Activated B cell treated with CpG ODN at 0.5 μM for 24 hours (primary cell): ENCODE measurements at regions of chr13 and their contacts with region 1.

Region 1: GRCh38 chr13:44435142-44435982 is 61.7 kb downstream of the SERP2 start:
- DNase-seq: peak; percentile 78
- ATAC-seq: peak; percentile 90
- H3K4me3 Mint-ChIP-seq: peak overlapping the region; percentile 85
- H3K27ac Mint-ChIP-seq: peak overlapping the region; percentile 69
- H3K4me1 Mint-ChIP-seq: peaks cover 28% of the 10 kb centered on the region
- H3K27me3 Mint-ChIP-seq: peaks cover 8% of the 10 kb centered on the region
- CTCF ChIP-seq: no peak

Region 2: DNA sequence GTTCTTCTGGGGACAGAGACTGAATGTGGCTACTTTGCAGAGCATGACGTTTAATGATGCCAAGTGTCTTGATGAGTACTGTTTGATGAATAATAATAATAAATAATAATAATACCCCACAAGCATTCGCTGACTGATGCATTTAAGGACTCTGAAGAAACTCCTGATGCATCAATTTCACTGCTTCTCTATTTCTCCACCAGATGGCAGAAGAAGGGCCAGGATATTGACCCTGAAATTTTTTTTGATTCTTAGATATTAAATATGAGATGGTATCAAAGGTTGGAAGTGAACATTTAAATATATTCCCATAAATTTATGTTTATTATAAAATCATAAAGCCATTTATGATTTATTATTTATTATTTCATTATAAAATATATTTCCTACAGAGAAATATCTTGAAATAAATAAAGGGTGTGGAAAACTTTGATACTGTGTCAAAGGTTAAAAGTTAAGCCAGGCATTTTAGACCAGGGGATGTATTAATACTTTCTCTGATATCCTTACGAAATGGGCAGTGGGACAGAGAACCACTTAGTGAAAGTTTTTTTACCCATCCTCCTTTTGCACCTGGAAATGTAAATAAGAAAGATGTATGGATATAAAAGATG is 384.8 kb before region 1 on chr13:
- CTCF ChIA-PET with region 1: interaction called, 36 read pairs
- POLR2A ChIA-PET with region 1: no interaction called
- intact Hi-C with region 1: loop called (anchors 1 kb)
- DNase-seq: no peak
- ATAC-seq: no peak
- H3K4me3 Mint-ChIP-seq: no peak overlapping the region
- H3K27ac Mint-ChIP-seq: no peak overlapping the region
- H3K4me1 Mint-ChIP-seq: no peaks in the 10 kb centered on the region
- H3K27me3 Mint-ChIP-seq: peaks cover 33% of the 10 kb centered on the region
- CTCF ChIP-seq: no peak

Region 3: GRCh38 chr13:44141725-44142539 is 293.4 kb before region 1 on chr13:
- CTCF ChIA-PET with region 1: interaction called, 3 read pairs
- POLR2A ChIA-PET with region 1: interaction called, 7 read pairs
- intact Hi-C with region 1: loop called (anchors 1 kb)
- DNase-seq: peak; percentile 100
- ATAC-seq: peak; percentile 99
- H3K4me3 Mint-ChIP-seq: peak overlapping the region; percentile 93
- H3K27ac Mint-ChIP-seq: peak overlapping the region; percentile 86
- H3K4me1 Mint-ChIP-seq: peaks cover 29% of the 10 kb centered on the region
- H3K27me3 Mint-ChIP-seq: peaks cover 8% of the 10 kb centered on the region
- CTCF ChIP-seq: no peak

Region 4: DNA sequence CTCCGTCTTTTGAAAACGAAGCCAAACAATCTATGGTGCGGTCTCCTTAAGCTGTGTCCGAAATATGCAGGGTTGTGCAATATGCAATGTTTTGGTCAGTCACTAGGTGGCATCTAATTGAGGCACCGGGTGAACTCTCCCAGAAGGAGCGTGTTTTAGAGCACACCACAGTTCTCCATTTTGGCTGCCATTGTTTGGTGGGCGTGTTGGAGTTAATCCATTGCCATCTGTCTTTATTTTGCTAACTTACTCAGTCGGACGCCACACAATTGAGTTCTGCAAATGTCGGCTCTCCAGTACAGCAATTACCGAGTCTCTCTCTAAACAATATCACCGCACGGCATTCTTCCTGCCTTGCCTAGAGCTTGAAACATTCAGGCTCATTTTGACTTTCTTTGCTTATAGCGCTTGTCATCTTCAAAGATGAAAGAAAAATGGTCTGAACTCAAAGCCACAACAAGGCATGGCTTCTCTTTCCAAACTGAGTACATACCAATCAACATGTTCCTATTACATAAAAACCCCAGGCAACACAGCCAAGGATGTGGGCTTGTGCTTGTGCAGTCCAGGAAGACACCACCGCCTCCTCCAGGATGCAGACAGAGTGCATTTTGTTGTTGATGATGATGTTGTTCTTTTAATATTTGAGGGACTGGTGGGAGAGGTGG is 243.7 kb before region 1 on chr13:
- CTCF ChIA-PET with region 1: interaction called, 10 read pairs
- POLR2A ChIA-PET with region 1: no interaction called
- intact Hi-C with region 1: loop called (anchors 1 kb)
- DNase-seq: no peak
- ATAC-seq: no peak
- H3K4me3 Mint-ChIP-seq: no peak overlapping the region
- H3K27ac Mint-ChIP-seq: no peak overlapping the region
- H3K4me1 Mint-ChIP-seq: no peaks in the 10 kb centered on the region
- H3K27me3 Mint-ChIP-seq: peaks cover 9% of the 10 kb centered on the region
- CTCF ChIP-seq: no peak

Region 5: DNA sequence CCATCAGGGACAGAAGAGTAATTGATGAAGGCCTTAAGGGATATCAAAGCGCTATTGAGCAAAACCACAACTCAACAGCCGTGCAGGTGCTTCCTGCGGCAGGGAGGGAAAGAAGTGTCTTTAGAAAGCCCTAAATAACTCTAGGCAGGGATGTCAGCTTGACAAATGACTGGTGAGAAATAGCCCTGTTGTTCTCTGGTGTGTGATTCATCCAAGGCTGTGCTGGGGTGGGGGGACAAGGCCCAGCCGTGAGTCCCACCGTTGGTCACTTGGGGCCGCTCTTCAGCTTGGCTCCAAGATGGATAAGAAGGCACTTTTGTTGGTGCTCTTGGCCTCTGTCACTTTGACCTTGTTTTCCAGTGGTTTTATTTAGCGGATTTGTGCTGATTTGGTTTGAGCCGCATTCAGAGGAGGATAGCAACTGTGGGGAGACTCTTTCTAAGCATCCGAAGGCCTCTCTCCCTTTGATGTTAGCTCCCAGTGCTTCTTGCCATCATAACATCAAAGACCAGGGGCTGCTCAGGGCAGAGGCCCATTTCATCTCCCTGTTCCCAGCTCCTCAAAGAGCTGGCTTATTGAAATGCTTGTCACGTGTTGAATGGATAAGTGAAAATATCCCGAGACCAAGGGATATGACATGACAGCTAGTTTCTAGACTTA is 192.0 kb before region 1 on chr13:
- CTCF ChIA-PET with region 1: interaction called, 17 read pairs
- POLR2A ChIA-PET with region 1: interaction called, 5 read pairs
- intact Hi-C with region 1: loop called (anchors 1 kb)
- DNase-seq: no peak
- ATAC-seq: peak; percentile 72
- H3K4me3 Mint-ChIP-seq: no peak overlapping the region
- H3K27ac Mint-ChIP-seq: no peak overlapping the region
- H3K4me1 Mint-ChIP-seq: peaks cover 5% of the 10 kb centered on the region
- H3K27me3 Mint-ChIP-seq: peaks cover 1% of the 10 kb centered on the region
- CTCF ChIP-seq: no peak

Region 6: GRCh38 chr13:44259045-44260027 is 176.0 kb before region 1 on chr13:
- CTCF ChIA-PET with region 1: no interaction called
- POLR2A ChIA-PET with region 1: no interaction called
- intact Hi-C with region 1: loop called (anchors 1 kb)
- DNase-seq: peak; percentile 36
- ATAC-seq: peak; percentile 92
- H3K4me3 Mint-ChIP-seq: peak overlapping the region; percentile 74
- H3K27ac Mint-ChIP-seq: peak overlapping the region; percentile 80
- H3K4me1 Mint-ChIP-seq: peaks cover 19% of the 10 kb centered on the region
- H3K27me3 Mint-ChIP-seq: no peaks in the 10 kb centered on the region
- CTCF ChIP-seq: no peak

Region 7: GRCh38 chr13:44516771-44517170 is 81.4 kb after region 1 on chr13:
- CTCF ChIA-PET with region 1: no interaction called
- POLR2A ChIA-PET with region 1: no interaction called
- intact Hi-C with region 1: no loop called
- DNase-seq: no peak
- ATAC-seq: no peak
- H3K4me3 Mint-ChIP-seq: no peak overlapping the region
- H3K27ac Mint-ChIP-seq: no peak overlapping the region
- H3K4me1 Mint-ChIP-seq: no peaks in the 10 kb centered on the region
- H3K27me3 Mint-ChIP-seq: no peaks in the 10 kb centered on the region
- CTCF ChIP-seq: no peak

Region 8: DNA sequence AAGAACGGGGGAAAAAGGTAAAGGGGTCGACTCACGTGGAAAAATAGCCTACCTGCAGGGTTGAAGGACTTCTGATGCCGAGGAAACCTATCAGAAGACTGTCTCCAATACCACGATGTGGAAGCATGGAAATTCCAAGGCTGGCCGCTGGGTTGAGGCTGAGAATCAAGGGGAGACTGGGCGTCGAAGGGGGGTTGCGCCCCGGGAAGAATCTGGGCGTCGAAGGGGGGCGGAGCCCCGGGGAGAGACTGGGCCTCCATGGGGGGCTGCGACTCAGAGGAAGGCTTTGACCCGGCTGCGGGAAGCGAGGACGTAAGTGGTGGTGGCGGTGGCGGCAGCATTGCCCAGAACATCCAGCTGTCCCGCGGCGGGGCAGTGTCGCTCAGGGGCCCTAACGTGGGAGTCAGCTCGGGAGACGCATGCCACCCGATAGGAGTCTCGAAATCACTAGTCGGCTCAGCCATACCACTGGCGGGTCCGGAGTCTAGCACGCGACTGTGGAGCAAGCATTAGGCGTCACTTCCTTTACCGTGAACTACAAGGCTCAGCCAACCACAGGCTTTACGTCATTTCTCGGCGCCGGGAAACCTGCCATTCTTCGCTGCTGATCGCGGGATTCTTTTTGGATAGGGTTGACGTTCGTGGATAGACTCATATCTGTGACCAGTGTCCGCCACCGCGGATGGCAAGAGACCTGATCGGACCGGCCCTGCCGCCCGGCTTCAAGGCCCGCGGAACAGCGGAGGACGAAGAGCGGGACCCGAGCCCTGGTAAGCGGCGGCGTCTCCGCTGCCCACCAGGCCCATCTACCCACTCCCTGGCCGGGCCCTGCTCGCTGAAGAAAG is 553.8 kb after region 1 on chr13 and contains the starts of genes GPALPP1 and NUFIP1:
- CTCF ChIA-PET with region 1: no interaction called
- POLR2A ChIA-PET with region 1: no interaction called
- intact Hi-C with region 1: loop called (anchors 1 kb)
- DNase-seq: peak; percentile 80
- ATAC-seq: peak; percentile 97
- H3K4me3 Mint-ChIP-seq: peak within 1 kb of the TSS; percentile 99
- H3K27ac Mint-ChIP-seq: peak within 1 kb of the TSS; percentile 98
- H3K4me1 Mint-ChIP-seq: peaks cover 37% of the 10 kb centered on the region
- H3K27me3 Mint-ChIP-seq: no peaks in the 10 kb centered on the region
- CTCF ChIP-seq: no peak
- total RNA-seq, gene GPALPP1: 28.8 and 35.8 TPM in 2 replicates
- total RNA-seq, gene NUFIP1: 6.6 and 7.8 TPM in 2 replicates